ENCODE measurements at regions of chr9 and their contacts with region 1.

Region 1: DNA sequence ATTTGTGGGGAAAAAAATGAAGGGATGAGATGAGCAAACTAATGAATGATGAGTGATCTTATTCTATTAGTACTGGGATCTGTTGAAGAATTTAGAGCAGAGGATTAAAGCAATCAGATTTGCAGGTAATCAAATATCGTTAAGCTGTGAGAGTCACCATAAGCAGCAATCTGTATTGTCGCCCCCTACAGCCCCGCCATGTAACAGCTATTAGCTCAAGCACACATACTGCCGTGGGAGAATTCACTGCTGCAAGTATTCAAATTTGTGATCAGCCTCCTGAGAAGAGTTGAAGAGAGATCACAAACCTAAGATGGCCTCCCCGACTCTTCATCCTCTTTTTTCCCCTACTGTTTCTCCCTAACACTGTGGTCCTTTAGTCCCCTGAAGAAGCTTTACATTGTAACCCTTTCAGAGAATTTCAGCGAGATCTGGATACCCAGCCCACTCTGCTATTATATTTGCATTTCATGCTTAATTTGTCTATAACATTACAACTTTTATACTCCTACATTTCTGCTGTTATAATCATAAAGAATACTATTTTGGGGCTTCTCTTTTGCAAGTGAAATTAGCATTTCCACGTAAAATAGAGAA is 28.5 kb upstream of the PHF24 start:
- H3K4me3 ChIP-seq: no peak overlapping the region
- H3K27ac ChIP-seq: no peak overlapping the region
- H3K4me1 ChIP-seq: no peaks in the 10 kb centered on the region
- CTCF ChIP-seq: no peak

Region 2: DNA sequence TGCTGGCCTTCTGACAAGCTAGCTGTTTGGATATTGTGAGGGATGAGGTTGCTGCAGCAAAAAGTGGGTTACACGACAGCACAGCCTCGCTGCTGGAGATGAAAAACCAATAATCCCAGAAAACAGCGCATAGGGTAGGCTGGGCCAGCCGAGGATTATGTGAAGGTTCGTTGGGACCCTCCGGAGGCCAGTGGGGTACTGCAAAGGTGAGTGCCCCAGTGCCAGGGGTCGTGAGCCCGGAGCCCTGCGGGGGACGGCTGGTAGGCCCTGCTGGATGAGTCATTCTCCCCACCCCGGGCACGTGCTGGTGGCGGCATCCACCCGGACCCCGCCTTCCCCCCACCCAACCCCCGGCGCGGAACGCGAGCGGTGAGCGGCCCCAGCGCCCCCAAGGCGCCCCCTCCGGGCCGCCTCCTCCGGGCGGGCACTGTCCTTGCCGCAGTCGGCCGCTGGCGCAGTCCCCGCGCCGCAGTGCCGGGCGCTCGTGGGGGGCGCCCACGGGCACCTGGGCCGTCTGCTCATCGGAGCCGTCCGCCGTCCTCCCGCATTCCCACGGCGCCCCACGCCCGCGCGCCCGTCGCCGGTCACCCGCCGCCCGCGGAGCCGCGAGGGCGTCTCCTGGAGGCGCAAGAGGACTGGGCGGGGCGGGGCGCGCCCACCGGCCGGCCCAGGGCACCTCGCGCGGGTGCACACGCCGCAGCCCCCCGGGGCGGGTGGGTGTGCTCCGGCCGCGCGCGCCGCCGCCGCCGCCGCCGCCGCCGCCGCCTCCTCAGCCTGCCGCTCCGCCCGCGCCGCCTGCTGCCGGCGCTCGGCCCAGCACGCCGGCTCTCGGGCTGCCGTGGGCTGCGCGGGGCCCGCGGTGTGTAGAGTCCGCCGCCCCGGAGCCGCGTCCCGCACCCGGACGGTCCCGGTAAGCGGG is 28.1 kb after region 1 on chr9 and contains the start of gene PHF24:
- CTCF ChIA-PET with region 1: interaction called, 18 read pairs
- POLR2A ChIA-PET with region 1: no interaction called
- H3K4me3 ChIP-seq: peak within 1 kb of the TSS; percentile 38
- H3K27ac ChIP-seq: no peak within 1 kb of the TSS
- H3K4me1 ChIP-seq: no peaks in the 10 kb centered on the region
- CTCF ChIP-seq: no peak

Measured in HEK293 (cell line).